CD4-positive, alpha-beta memory T cell (primary cell): ENCODE measurements at regions of chr12 and their contacts with region 1.

Region 1: DNA sequence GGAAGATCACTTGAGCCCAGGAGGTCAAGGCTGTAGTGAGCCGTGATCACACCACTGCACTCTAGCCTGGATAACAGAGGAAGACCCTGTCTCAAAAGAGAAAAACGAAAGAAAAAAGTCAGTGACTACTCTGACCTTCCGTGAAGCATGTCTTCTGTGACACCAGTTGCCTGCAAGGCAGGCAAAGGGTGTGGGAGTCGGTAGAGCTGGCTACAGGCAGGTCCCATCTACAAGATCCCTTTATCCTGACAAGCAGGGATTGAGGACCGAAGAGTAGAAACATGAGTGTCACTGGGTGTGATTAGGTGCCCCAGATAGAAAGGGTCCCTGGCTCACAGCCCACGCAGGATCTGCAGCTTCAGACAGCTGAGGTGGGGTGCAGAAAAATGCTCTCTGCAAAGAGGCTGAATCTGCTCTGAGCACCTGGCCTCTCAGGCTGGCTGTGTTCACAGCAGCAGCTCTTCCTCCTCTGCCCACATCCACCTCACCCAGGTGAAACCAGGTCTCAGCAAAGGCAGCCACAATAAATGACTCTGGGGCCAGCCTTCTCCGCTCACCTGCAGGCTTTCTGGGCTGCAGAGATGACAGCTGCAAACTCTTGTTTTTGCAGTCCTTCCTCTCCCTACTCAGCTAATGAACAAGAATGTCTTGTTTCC is 28.6 kb upstream of the HSP90B1 start:
- DNase-seq: peak; percentile 59 to 71 (median 67)
- H3K4me3 ChIP-seq: peak overlapping the region in 1 of 2 donors; percentile 40
- H3K4me3 Mint-ChIP-seq: peak overlapping the region; percentile 64 to 85 (median 74)
- H3K27ac ChIP-seq: peak overlapping the region; percentile 41
- H3K27ac Mint-ChIP-seq: peak overlapping the region; percentile 82 to 92 (median 85)
- H3K4me1 ChIP-seq: peaks cover 47% of the 10 kb centered on the region
- H3K4me1 Mint-ChIP-seq: peaks cover 42 to 62% (median 50%) of the 10 kb centered on the region in 4 donors
- H3K27me3 ChIP-seq: no peaks in the 10 kb centered on the region
- H3K27me3 Mint-ChIP-seq: no peaks in the 10 kb centered on the region

Region 2: GRCh38 chr12:103884316-103884715 is 17.3 kb before region 1 on chr12:
- CTCF ChIA-PET with region 1: interaction called, 10 read pairs
- POLR2A ChIA-PET with region 1: interaction called, 3 read pairs
- intact Hi-C with region 1: no loop called
- DNase-seq: peak; percentile 33 to 52 (median 41)
- H3K4me3 ChIP-seq: no peak overlapping the region
- H3K4me3 Mint-ChIP-seq: peak overlapping the region in 1 of 8 donors; percentile 4
- H3K27ac ChIP-seq: no peak overlapping the region
- H3K27ac Mint-ChIP-seq: peak overlapping the region in 5 of 7 donors; percentile 12 to 44 (median 26)
- H3K4me1 ChIP-seq: peaks cover 4% of the 10 kb centered on the region
- H3K4me1 Mint-ChIP-seq: peaks cover 6 to 24% (median 12%) of the 10 kb centered on the region in 4 donors
- H3K27me3 ChIP-seq: no peaks in the 10 kb centered on the region
- H3K27me3 Mint-ChIP-seq: no peaks in the 10 kb centered on the region

Region 3: DNA sequence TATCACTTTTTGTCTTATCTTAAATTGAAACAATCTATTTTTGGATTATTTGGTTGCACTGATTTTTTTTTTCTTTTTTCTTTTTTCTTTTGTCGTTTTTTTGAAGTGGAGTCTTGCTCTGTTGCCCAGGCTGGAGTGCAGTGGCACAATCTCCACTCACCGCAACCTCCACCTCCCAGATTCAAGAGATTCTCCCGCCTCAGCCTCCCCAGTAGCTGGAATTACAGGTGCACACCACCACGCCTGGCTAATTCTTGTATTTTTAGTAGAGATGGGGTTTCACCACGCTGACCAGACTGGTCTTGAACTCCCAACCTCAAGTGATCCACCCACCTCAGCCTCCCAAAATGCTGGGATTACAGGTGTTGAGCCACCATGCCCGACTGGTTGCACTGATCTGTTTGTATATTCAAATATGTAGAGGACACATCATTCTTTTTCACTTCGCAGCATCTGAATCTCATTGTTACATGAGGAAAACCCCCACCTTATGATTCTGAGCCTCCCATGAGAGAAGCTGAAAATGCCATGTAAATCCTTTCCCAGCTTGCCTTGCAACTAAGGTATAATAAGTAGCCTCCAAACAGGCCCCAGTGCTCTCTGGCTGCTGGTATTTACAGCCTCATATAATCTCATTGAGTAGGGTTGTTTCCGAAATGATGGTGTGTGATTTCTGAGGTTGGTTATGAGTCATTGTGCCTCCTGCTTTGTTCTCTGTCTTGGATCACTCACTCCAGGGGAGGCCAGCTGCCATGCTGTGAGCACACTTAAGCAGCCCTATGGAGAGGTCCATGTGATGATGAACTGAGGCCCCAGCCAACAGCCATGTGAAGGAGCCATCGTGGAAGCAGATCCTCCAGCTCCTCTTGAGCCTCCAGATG is 23.4 kb after region 1 on chr12:
- CTCF ChIA-PET with region 1: interaction called, 5 read pairs
- POLR2A ChIA-PET with region 1: interaction called, 98 read pairs
- intact Hi-C with region 1: loop called (anchors 1 kb)
- DNase-seq: peak in 2 of 5 donors; percentile 9 to 69
- H3K4me3 ChIP-seq: no peak overlapping the region
- H3K4me3 Mint-ChIP-seq: peak overlapping the region in 6 of 8 donors; percentile 17 to 73 (median 60)
- H3K27ac ChIP-seq: no peak overlapping the region
- H3K27ac Mint-ChIP-seq: peak overlapping the region in 6 of 7 donors; percentile 56 to 92 (median 80)
- H3K4me1 ChIP-seq: peaks cover 26% of the 10 kb centered on the region
- H3K4me1 Mint-ChIP-seq: peaks cover 22 to 44% (median 30%) of the 10 kb centered on the region in 4 donors
- H3K27me3 ChIP-seq: no peaks in the 10 kb centered on the region
- H3K27me3 Mint-ChIP-seq: peaks cover 0 to under 1% of the 10 kb centered on the region in 2 donors

Region 4: DNA sequence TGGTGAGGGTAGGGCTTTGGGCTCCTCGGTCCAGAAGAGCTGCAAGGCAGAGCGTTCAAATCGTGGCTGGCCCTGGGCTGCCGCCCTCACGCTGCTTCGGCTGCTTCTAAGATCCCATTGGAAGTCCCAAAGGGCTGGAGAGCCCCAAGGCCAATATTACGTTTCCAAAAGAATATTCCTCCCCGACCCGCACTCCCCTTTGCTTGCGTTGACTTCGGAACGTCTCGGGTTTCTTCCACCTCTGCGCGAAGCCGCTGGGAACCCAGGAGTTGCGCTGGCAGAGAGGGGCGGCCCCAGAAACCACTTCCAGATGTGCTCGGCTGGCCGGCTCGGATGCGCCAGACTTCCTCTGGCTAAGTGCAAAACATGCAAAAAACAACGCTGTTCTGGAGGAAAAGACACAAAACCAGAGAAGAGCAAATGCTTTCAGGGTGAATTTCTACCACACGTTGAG is 148.3 kb after region 1 on chr12 and contains the start of gene GLT8D2:
- CTCF ChIA-PET with region 1: no interaction called
- POLR2A ChIA-PET with region 1: no interaction called
- intact Hi-C with region 1: no loop called
- DNase-seq: no peak
- H3K4me3 ChIP-seq: no peak within 1 kb of the TSS
- H3K4me3 Mint-ChIP-seq: peak within 1 kb of the TSS in 7 of 8 donors; percentile 20 to 73 (median 44)
- H3K27ac ChIP-seq: no peak within 1 kb of the TSS
- H3K27ac Mint-ChIP-seq: no peak within 1 kb of the TSS
- H3K4me1 ChIP-seq: peaks cover 8% of the 10 kb centered on the region
- H3K4me1 Mint-ChIP-seq: peaks cover 4 to 9% (median 7%) of the 10 kb centered on the region in 4 donors
- H3K27me3 ChIP-seq: peaks cover 16% of the 10 kb centered on the region
- H3K27me3 Mint-ChIP-seq: peaks cover 21 to 30% of the 10 kb centered on the region in 2 donors
- total RNA-seq, gene GLT8D2: not detected